Activated T-helper 2 cell treated with anti-CD3 and anti-CD28 coated beads, Interferon-gamma antibody, Interleukin-2, Interleukin-4, amounts not matched to agents 10 μg/mL and 5 μg/mL and 100 μg/mL, durations not matched to agents 14 hours and 24 hours and 36 hours (primary cell): ENCODE measurements at regions of chr12 and their contacts with region 1.

Region 1: DNA sequence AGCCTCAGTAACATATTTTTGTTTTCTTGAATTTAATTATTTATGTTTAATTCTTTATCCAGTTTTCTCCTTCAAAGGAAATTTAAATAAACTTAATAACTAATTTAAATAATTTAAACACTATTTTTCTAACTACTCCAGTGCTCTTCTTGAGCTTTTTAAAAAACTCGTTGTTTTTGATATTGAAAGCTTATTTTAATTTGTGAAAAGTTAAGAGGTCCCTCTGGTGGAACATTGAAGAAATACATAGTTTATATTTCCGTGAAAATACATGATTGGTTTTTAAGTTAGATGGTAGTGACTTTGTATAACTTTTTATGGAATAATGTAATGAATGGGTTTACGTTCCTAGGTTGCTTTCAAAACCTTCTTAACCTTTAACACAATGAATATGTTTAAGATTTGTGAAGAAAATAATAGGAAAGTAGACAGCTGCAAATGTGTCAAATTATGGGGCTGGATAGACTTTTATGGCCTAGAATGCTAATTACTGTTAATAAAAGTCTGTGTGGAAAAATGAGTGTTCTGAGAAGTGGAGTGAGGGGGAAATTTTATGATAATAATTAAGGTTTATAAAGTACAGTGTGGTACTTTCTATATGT is 45.9 kb upstream of the MSRB3 start:
- DNase-seq: no peak
- H3K4me3 Mint-ChIP-seq: no peak overlapping the region
- H3K27ac Mint-ChIP-seq: no peak overlapping the region
- H3K4me1 Mint-ChIP-seq: peaks cover 9% of the 10 kb centered on the region
- H3K27me3 Mint-ChIP-seq: no peaks in the 10 kb centered on the region

Region 2: DNA sequence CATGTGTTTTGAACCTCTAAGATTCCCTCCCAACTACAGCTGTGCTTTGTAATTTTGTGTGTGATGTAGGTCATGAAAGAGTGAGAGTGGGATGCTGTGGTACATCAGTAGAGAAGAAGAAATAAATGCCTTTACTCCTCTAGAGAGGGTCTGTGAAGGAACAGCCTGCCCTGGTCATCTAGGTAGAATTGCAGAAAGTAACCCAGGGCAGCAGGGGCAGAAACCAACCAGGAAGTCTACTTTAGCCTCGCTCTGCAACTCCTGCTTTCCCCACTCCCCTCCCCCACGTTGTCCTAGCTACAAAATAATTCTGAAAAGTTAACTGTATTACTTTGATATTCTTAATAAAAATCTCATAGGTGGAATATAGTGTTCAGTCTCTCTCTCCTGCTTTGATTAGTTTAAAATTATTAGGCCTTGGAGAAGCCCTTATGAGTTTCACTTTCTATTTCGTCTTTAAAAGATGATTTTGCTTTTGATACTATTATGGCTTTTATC is 773.1 kb before region 1 on chr12:
- intact Hi-C with region 1: no loop called
- DNase-seq: no peak
- H3K4me3 Mint-ChIP-seq: peak overlapping the region; percentile 76
- H3K27ac Mint-ChIP-seq: peak overlapping the region; percentile 77
- H3K4me1 Mint-ChIP-seq: peaks cover 43% of the 10 kb centered on the region
- H3K27me3 Mint-ChIP-seq: no peaks in the 10 kb centered on the region

Region 3: GRCh38 chr12:64801381-64801780 is 431.2 kb before region 1 on chr12:
- intact Hi-C with region 1: loop called (anchors 10 kb)
- DNase-seq: no peak
- H3K4me3 Mint-ChIP-seq: no peak overlapping the region
- H3K27ac Mint-ChIP-seq: no peak overlapping the region
- H3K4me1 Mint-ChIP-seq: peaks cover 3% of the 10 kb centered on the region
- H3K27me3 Mint-ChIP-seq: peaks cover 34% of the 10 kb centered on the region

Region 4: DNA sequence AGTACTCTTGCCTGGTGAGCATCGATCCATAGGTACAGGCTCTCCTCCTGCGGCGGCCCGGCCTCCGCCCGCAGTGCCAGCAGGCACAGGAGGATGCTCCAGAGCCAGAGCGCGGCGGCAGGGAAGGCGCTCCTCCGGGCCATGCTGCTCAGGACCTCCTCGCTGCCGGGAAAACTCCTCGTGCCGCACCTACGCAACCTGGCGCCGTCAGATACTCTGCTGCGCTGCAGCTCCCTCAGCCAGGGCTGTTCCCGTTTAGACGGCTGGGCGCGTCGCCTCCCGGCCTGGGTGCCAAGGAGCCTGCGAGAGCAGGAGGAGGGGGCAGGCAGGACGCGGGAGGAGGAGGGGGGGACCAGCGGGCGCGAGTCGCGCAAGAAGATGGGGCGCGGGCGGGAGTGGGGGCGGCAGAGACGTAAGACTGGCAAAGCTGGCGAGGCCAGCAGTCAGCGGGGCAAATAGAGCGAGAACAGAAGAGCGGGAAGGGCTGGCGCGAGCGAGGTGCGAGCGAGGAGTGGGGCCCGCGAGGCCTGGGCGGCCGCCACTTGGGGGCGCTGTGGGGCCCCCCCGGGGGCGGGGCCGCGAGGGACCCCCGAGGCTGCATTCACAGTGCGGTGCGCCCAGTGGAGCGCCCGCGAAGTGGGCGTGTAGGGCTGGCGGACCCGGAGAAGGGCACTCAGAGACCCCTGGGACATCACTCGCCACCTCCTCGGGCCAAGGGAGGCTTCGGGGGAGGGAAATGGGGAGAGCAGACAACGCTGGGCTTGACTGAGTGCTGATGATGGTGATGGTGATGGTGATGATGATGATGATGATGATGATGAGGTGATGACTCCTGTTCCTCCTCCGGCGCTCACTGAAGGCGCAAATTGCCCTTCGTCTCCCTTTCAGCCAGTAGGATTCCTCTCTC is 111.3 kb before region 1 on chr12 and contains the start of gene WIF1:
- intact Hi-C with region 1: loop called (anchors 5 kb)
- DNase-seq: no peak
- H3K4me3 Mint-ChIP-seq: peak within 1 kb of the TSS; percentile 37
- H3K27ac Mint-ChIP-seq: no peak within 1 kb of the TSS
- H3K4me1 Mint-ChIP-seq: peaks cover 5% of the 10 kb centered on the region
- H3K27me3 Mint-ChIP-seq: peaks cover 34% of the 10 kb centered on the region
- total RNA-seq, gene WIF1: not detected in 2 replicates

Region 5: GRCh38 chr12:65169320-65170208 is 63.0 kb before region 1 on chr12 and contains the start of gene LEMD3:
- intact Hi-C with region 1: loop called (anchors 2 kb)
- DNase-seq: peak; percentile 88
- H3K4me3 Mint-ChIP-seq: peak within 1 kb of the TSS; percentile 99
- H3K27ac Mint-ChIP-seq: peak within 1 kb of the TSS; percentile 99
- H3K4me1 Mint-ChIP-seq: peaks cover 24% of the 10 kb centered on the region
- H3K27me3 Mint-ChIP-seq: peaks cover 2% of the 10 kb centered on the region
- total RNA-seq, gene LEMD3: 26.7 and 29.2 TPM in 2 replicates

Region 6: GRCh38 chr12:65195387-65196055 is 37.1 kb before region 1 on chr12:
- intact Hi-C with region 1: loop called (anchors 5 kb)
- DNase-seq: no peak
- H3K4me3 Mint-ChIP-seq: no peak overlapping the region
- H3K27ac Mint-ChIP-seq: no peak overlapping the region
- H3K4me1 Mint-ChIP-seq: peaks cover 40% of the 10 kb centered on the region
- H3K27me3 Mint-ChIP-seq: no peaks in the 10 kb centered on the region